ENCODE measurements at regions of chr7 and their contacts with region 1.

Region 1: GRCh38 chr7:131107337-131108211 is 220.1 kb upstream of the MKLN1 start:
- DNase-seq: peak; percentile 93
- H3K4me3 ChIP-seq: peak overlapping the region; percentile 74 to 97 (median 94)
- H3K27ac ChIP-seq: peak overlapping the region; percentile 98 to 99 (median 98)
- H3K4me1 ChIP-seq: peaks cover 28 to 68% (median 62%) of the 10 kb centered on the region in 4 donors
- H3K27me3 ChIP-seq: no peaks in the 10 kb centered on the region
- CTCF ChIP-seq: no peak
- EP300 ChIP-seq: no peak
- POLR2A ChIP-seq: peak; percentile 57

Region 2: GRCh38 chr7:130998993-130999602 is 108.5 kb before region 1 on chr7:
- intact Hi-C with region 1: no loop called
- DNase-seq: peak; percentile 21
- H3K4me3 ChIP-seq: no peak overlapping the region
- H3K27ac ChIP-seq: peak overlapping the region in 1 of 4 donors; percentile 21
- H3K4me1 ChIP-seq: peaks cover 65 to 71% (median 70%) of the 10 kb centered on the region in 4 donors
- H3K27me3 ChIP-seq: no peaks in the 10 kb centered on the region
- CTCF ChIP-seq: no peak
- EP300 ChIP-seq: no peak
- POLR2A ChIP-seq: no peak

Region 3: DNA sequence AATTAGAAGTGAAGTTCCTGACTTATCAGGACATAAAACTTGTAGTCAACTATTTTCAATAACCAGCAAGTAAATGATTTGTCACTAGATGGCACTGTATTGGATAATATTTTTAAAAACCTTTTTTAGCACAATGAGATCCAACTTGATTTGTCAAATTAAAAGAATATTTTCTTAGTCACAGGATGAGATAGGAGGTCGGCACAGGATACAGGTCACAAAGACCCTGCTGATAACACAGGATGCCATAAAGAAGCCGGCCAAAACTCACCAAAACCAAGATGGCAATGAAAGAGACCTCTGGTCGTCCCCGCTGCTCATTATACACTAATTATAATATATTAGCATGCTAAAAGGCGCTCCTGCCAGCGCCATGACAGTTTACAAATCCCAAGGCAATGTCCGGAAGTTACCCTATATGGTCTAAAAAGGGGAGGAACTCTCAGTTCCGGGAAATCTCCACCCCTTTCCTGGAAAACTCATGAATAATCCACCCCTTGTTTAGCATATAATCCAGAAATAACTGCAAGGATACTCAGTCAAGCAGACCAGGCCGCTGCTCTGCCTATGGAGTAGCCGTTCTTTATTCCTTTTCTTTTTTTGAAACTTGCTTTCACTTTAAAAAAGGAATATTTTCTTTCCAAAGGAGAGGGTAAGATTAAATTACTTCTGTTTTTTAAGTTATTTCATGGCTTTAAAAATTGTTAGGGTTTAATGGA is 35.6 kb before region 1 on chr7:
- intact Hi-C with region 1: loop called (anchors 5 kb)
- DNase-seq: no peak
- H3K4me3 ChIP-seq: peak overlapping the region in 3 of 4 donors; percentile 3 to 19 (median 10)
- H3K27ac ChIP-seq: peak overlapping the region; percentile 18 to 68 (median 56)
- H3K4me1 ChIP-seq: peaks cover 50 to 97% (median 86%) of the 10 kb centered on the region in 4 donors
- H3K27me3 ChIP-seq: no peaks in the 10 kb centered on the region
- CTCF ChIP-seq: peak in 2 of 3 experiments; percentile 33 to 50
- EP300 ChIP-seq: no peak
- POLR2A ChIP-seq: no peak

Region 4: DNA sequence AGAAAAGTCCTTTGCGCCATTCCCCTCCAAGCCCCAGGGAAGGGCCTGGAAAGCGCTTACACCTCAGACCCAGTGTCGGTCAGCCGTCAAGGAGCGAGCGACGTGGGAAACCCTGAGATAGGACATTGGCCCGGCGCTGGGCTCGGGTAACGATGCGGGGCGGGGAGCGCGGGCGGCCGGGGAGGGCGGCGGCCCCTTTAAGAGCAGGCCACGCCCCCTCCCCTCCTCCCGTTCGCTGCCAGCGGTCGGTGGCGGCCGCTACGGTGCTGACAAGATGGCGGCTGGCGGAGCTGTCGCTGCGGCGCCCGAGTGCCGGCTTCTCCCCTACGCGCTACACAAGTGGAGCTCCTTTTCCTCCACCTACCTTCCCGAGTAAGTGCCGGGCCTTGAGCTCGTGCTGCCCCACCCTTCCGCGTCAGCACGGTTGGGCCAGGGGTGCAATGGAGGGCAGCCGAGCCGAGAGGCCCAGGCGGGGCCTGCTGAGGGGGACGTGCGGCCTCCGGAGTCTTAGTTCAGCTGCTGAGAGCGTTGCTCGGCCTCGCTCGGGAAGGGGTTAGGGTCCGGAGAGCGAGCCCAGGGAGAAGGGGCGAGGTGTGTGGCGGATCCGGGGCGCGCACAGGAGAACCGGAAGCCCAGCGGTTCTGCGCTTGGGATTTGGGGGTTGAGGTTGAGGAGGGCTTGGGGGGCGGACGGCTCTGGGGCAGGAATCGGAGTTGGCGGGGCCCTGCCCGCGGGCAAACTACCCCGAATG is 220.2 kb after region 1 on chr7 and contains the start of gene MKLN1:
- intact Hi-C with region 1: loop called (anchors 5 kb)
- DNase-seq: peak; percentile 96
- H3K4me3 ChIP-seq: peak within 1 kb of the TSS; percentile 82 to 98 (median 91)
- H3K27ac ChIP-seq: peak within 1 kb of the TSS; percentile 97
- H3K4me1 ChIP-seq: peaks cover 18 to 39% (median 34%) of the 10 kb centered on the region in 4 donors
- H3K27me3 ChIP-seq: no peaks in the 10 kb centered on the region
- CTCF ChIP-seq: no peak
- EP300 ChIP-seq: no peak
- POLR2A ChIP-seq: peak; percentile 54
- total RNA-seq, gene MKLN1: 37.9 to 55.2 (median 41.3) TPM

Region 5: DNA sequence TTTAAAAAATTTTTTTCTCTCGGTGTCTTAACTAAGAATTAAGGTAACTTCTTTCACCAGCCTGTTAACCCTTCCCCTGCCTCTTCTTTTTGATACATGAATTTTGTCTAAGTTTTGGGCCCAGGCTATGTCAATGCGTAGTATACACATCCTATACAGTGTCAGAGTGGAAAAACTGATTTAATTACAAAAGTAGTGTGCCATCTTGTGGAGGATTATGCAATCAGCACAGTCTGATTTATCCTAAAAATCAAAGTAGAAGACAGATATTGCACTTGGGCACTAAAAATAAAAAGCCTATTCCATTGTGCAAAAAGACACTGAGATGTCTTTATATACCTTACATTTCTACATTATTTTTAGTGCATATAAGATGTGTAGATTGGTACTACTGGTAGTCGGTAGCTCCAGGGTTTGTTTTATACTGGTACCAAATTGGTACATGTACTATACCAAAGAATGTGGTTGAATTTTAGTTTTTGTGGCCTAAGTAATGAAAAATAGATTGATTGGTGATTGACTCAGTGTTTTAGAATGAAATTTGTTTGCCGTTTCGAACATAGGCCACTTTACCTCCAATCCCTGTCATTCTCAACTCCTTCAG is 316.7 kb after region 1 on chr7:
- intact Hi-C with region 1: loop called (anchors 10 kb)
- DNase-seq: no peak
- H3K4me3 ChIP-seq: no peak overlapping the region
- H3K27ac ChIP-seq: peak overlapping the region in 1 of 4 donors; percentile 26
- H3K4me1 ChIP-seq: peaks cover 11 to 40% (median 27%) of the 10 kb centered on the region in 4 donors
- H3K27me3 ChIP-seq: no peaks in the 10 kb centered on the region
- CTCF ChIP-seq: peak; percentile 64 to 69 (median 69)
- EP300 ChIP-seq: no peak
- POLR2A ChIP-seq: no peak

Measured in esophagus muscularis mucosa (tissue), 4 donors.